Transverse colon (tissue), 4 donors: ENCODE measurements at regions of chr7 and their contacts with region 1.

Region 1: DNA sequence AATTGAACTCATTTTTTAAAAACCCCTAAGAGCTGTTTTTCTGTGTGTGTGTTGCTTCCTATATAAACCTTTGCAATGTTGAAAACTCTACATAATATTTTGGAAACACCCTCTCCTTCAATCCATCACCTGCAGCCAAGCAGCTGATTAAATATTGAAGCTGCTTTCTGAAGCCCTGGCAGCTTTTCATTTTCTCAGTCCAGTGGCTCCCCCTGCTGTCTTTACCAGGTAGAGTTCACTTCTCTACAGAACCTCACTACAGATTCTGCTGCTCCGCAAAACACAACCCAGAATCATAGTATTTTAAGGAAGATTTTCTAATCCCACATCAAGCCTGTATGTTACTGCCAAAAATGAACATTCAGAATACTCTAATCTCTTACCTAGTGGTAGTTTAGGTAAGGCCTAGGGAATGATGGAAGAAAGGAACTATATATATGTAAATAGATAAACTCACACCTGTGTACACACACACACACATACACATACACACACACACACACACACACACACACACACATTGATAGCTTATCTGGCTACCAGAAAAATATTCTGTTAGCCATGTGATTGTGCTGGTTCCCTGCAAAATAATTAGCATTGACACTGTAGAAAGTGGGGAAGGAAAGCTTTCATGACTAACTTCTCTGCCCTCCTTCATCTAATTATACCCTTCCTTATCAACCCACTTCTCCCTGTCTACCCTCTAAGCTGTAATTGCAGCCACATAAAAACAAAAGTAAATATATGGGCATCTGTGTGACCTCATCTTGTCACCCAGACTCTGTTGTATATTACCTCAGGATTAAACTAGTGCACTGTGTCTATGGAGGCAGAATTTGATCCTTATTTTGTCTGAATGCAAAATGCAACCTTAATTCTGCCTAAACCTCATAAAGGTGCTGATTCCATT is 229.5 kb upstream of the FZD1 start:
- DNase-seq: peak; percentile 57
- H3K4me3 ChIP-seq: no peak overlapping the region
- H3K27ac ChIP-seq: no peak overlapping the region
- H3K4me1 ChIP-seq: peaks cover 0 to 3% (median 0%) of the 10 kb centered on the region in 4 donors
- H3K27me3 ChIP-seq: no peaks in the 10 kb centered on the region
- CTCF ChIP-seq: peak; percentile 50 to 65 (median 54)
- EP300 ChIP-seq: no peak
- POLR2A ChIP-seq: no peak

Region 2: DNA sequence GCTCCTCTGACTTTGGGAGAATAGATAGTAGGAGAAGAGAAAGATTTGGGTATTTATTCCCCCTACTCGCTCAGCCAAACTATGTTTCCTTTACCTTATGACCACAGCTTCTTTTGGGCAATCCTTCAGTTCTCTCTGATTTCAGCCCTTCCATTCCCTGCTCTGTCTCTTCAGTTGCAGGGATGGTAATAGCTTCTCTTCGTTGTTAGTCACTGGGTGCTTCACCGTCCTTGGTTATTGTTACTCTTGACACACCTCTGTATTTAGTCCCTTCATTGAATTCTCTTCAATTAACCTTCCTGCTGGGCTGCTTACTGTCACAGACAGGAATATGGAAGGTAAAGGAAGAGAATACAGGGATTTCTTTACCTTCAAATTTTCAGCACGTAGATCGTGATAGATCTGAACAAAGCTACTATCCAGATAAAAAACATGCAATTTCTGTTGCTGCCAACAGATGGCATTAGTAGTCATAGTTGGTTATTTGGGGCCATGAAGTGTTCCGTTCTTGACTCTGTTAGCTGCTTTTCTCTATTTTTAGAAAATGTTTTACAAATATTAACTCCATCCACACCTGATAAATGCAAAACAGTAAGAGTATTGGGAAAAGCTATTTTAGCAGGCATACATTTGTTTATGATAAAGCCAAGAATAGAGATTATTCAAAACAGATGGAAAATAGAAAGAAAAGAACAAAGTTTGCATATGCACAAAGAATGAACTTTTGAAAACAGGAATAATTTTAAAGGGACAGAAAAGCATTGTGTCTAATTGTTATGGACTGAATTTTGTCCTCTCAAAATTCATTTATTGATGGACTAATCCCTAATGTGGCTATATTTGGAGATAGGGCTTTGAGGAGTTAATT is 579.3 kb before region 1 on chr7:
- in situ Hi-C with region 1: loop called in 3 of 4 experiments (anchors 25 kb)
- intact Hi-C with region 1: loop called (anchors 10 kb)
- DNase-seq: no peak
- H3K4me3 ChIP-seq: peak overlapping the region in 2 of 4 donors; percentile 4 to 16
- H3K27ac ChIP-seq: no peak overlapping the region
- H3K4me1 ChIP-seq: peaks cover 0 to 9% (median 2%) of the 10 kb centered on the region in 4 donors
- H3K27me3 ChIP-seq: no peaks in the 10 kb centered on the region
- CTCF ChIP-seq: peak; percentile 60 to 71 (median 69)
- EP300 ChIP-seq: no peak
- POLR2A ChIP-seq: no peak

Region 3: GRCh38 chr7:90595801-90596671 is 438.7 kb before region 1 on chr7 and contains the start of gene CDK14:
- in situ Hi-C with region 1: loop called in 1 of 4 experiments (anchors 25 kb)
- intact Hi-C with region 1: no loop called
- DNase-seq: peak; percentile 81
- H3K4me3 ChIP-seq: peak within 1 kb of the TSS; percentile 62 to 78 (median 68)
- H3K27ac ChIP-seq: peak within 1 kb of the TSS; percentile 71 to 80 (median 76)
- H3K4me1 ChIP-seq: peaks cover 0 to 26% (median 7%) of the 10 kb centered on the region in 4 donors
- H3K27me3 ChIP-seq: peaks cover 19% of the 10 kb centered on the region
- CTCF ChIP-seq: peak; percentile 17 to 43 (median 33)
- EP300 ChIP-seq: no peak
- POLR2A ChIP-seq: no peak
- total RNA-seq, gene CDK14: 0.40 to 15.4 (median 4.8) TPM